GM12878 (cell line): ENCODE measurements at regions of chrX and their contacts with region 1.

Region 1: DNA sequence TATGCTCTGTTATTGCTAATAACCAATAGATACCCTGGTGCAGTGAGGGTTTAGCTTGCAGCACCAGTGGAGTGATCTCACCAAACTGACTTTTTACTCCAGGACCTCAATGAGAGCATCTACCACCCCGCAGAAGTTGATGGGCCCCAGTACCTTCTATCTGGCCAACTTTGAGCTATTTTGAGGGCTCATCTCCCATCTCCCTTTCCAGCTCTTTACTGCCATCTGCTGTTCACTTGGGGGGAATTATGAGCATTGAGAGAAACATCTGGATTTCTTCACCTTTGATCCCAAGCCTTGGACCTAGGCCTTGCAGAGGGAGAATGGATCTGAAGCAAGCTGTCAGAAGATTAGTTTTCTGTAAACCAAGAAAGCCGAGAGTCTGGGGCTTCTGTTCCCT is 143.6 kb downstream of the TMEM164 start:
- DNase-seq: no peak
- ATAC-seq: peak; percentile 94
- H3K4me3 ChIP-seq: no peak overlapping the region
- H3K27ac ChIP-seq: no peak overlapping the region
- H3K4me1 ChIP-seq: no peaks in the 10 kb centered on the region
- H3K27me3 ChIP-seq: no peaks in the 10 kb centered on the region
- CTCF ChIP-seq: peak; percentile 63 to 71 (median 69)
- EP300 ChIP-seq: no peak
- POLR2A ChIP-seq: no peak
- RAD21 ChIP-seq: peak; percentile 84

Region 2: DNA sequence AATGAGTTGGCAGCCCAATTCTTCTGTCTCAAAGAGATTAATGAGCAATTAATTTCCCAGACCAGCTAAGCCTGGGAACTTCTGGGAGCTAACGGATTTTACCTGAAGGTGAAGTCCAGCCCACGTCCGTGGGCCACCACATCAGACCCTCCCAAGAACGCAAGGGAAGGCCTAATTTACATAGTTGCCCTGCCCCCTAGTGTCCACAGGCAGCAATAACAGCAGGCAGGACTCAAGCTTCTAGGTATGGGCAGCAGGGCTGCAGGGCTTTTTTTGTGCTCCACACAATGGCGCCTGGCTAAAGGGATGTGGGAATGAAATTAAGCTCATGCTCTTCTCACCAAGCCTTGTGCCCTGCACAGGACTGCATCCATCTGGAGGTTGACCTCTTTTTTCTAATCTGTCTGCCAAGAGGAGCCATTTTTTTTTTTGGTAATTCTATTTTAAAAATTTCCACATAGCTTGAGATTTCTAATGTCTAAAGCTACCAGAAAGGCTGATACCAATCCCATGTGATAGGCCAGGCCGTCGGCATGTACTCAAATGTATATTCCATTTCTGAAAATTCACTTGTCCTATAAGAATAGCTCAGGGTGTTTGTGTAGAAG is 255.5 kb before region 1 on chrX:
- CTCF ChIA-PET with region 1: interaction called, 42 read pairs
- POLR2A ChIA-PET with region 1: no interaction called
- RAD21 ChIA-PET with region 1: interaction called, 22 read pairs
- SMC1A ChIA-PET with region 1: interaction called, 18 read pairs
- in situ Hi-C with region 1: no loop called
- intact Hi-C with region 1: no loop called
- DNase-seq: no peak
- ATAC-seq: peak; percentile 77
- H3K4me3 ChIP-seq: no peak overlapping the region
- H3K27ac ChIP-seq: no peak overlapping the region
- H3K4me1 ChIP-seq: peaks cover 16% of the 10 kb centered on the region
- H3K27me3 ChIP-seq: no peaks in the 10 kb centered on the region
- CTCF ChIP-seq: peak; percentile 85 to 96 (median 94)
- EP300 ChIP-seq: no peak
- POLR2A ChIP-seq: no peak
- RAD21 ChIP-seq: peak; percentile 81

Region 3: GRCh38 chrX:109920325-109920724 is 226.2 kb before region 1 on chrX:
- CTCF ChIA-PET with region 1: interaction called, 16 read pairs
- POLR2A ChIA-PET with region 1: no interaction called
- RAD21 ChIA-PET with region 1: interaction called, 3 read pairs
- SMC1A ChIA-PET with region 1: interaction called, 4 read pairs
- in situ Hi-C with region 1: no loop called
- intact Hi-C with region 1: no loop called
- DNase-seq: no peak
- ATAC-seq: no peak
- H3K4me3 ChIP-seq: no peak overlapping the region
- H3K27ac ChIP-seq: no peak overlapping the region
- H3K4me1 ChIP-seq: peaks cover 5% of the 10 kb centered on the region
- H3K27me3 ChIP-seq: no peaks in the 10 kb centered on the region
- CTCF ChIP-seq: no peak
- EP300 ChIP-seq: no peak
- POLR2A ChIP-seq: no peak
- RAD21 ChIP-seq: no peak

Region 4: GRCh38 chrX:110046001-110046400 is 100.5 kb before region 1 on chrX:
- CTCF ChIA-PET with region 1: interaction called, 32 read pairs
- POLR2A ChIA-PET with region 1: no interaction called
- RAD21 ChIA-PET with region 1: interaction called, 6 read pairs
- SMC1A ChIA-PET with region 1: interaction called, 12 read pairs
- in situ Hi-C with region 1: no loop called
- intact Hi-C with region 1: no loop called
- DNase-seq: no peak
- ATAC-seq: no peak; the same call in 2 of the 3 replicates
- H3K4me3 ChIP-seq: no peak overlapping the region
- H3K27ac ChIP-seq: no peak overlapping the region
- H3K4me1 ChIP-seq: peaks cover 15% of the 10 kb centered on the region
- H3K27me3 ChIP-seq: no peaks in the 10 kb centered on the region
- CTCF ChIP-seq: no peak
- EP300 ChIP-seq: no peak
- POLR2A ChIP-seq: no peak
- RAD21 ChIP-seq: peak; percentile 19; the same call in 1 of the 2 replicates

Region 5: DNA sequence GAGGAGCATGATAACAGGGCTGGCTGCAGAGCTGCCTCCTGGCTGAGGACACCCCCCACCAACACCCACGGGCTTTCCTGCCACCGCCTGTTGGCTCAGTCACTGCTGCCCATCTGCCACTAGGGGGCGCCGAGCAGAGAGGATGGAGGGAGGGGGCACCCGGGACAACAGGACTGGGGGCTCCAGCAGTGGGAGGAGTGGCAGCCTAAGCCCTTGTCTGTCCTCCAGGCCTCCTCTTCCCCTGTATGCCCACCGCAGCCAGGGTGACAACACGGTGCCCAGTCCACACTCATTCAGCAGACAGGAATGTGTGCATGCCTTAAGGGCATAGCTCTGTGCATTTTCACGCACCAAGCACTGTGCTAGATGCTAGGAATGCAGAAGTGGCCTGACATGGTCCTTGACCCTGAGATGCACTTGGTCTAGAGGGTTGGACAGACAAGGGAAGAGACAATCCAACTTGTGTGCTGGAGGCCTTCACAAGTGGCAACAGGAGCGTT is 21.5 kb after region 1 on chrX:
- CTCF ChIA-PET with region 1: interaction called, 32 read pairs
- POLR2A ChIA-PET with region 1: no interaction called
- RAD21 ChIA-PET with region 1: no interaction called
- SMC1A ChIA-PET with region 1: no interaction called
- in situ Hi-C with region 1: no loop called
- intact Hi-C with region 1: no loop called
- DNase-seq: no peak
- ATAC-seq: peak; percentile 73
- H3K4me3 ChIP-seq: no peak overlapping the region
- H3K27ac ChIP-seq: no peak overlapping the region
- H3K4me1 ChIP-seq: peaks cover 10% of the 10 kb centered on the region
- H3K27me3 ChIP-seq: no peaks in the 10 kb centered on the region
- CTCF ChIP-seq: peak; percentile 52 to 75 (median 67)
- EP300 ChIP-seq: no peak
- POLR2A ChIP-seq: no peak
- RAD21 ChIP-seq: peak; percentile 52

Region 6: GRCh38 chrX:110219920-110220319 is 73.4 kb after region 1 on chrX:
- CTCF ChIA-PET with region 1: no interaction called
- POLR2A ChIA-PET with region 1: no interaction called
- RAD21 ChIA-PET with region 1: no interaction called
- SMC1A ChIA-PET with region 1: no interaction called
- in situ Hi-C with region 1: no loop called
- intact Hi-C with region 1: no loop called
- DNase-seq: no peak
- ATAC-seq: no peak
- H3K4me3 ChIP-seq: no peak overlapping the region
- H3K27ac ChIP-seq: no peak overlapping the region
- H3K4me1 ChIP-seq: no peaks in the 10 kb centered on the region
- H3K27me3 ChIP-seq: no peaks in the 10 kb centered on the region
- CTCF ChIP-seq: no peak
- EP300 ChIP-seq: no peak
- POLR2A ChIP-seq: no peak
- RAD21 ChIP-seq: no peak

Region 7: GRCh38 chrX:110418316-110419235 is 272.1 kb after region 1 on chrX:
- CTCF ChIA-PET with region 1: interaction called, 792 read pairs
- POLR2A ChIA-PET with region 1: no interaction called
- RAD21 ChIA-PET with region 1: interaction called, 5 read pairs
- SMC1A ChIA-PET with region 1: interaction called, 289 read pairs
- in situ Hi-C with region 1: no loop called
- intact Hi-C with region 1: no loop called
- DNase-seq: no peak
- ATAC-seq: peak; percentile 38; the same call in 1 of the 3 replicates
- H3K4me3 ChIP-seq: no peak overlapping the region
- H3K27ac ChIP-seq: no peak overlapping the region
- H3K4me1 ChIP-seq: peaks cover 5% of the 10 kb centered on the region
- H3K27me3 ChIP-seq: no peaks in the 10 kb centered on the region
- CTCF ChIP-seq: peak in 2 of 3 experiments; percentile 20 to 37; a peak in 3 of 6 replicates
- EP300 ChIP-seq: no peak
- POLR2A ChIP-seq: no peak
- RAD21 ChIP-seq: peak; percentile 43; the same call in 1 of the 2 replicates